Posterior cingulate gyrus (tissue), 11 donors: ENCODE measurements at regions of chr6 and their contacts with region 1.

Region 1: GRCh38 chr6:3742426-3743344 is 8.8 kb downstream of the PXDC1 start:
- DNase-seq: peak; percentile 77 to 98 (median 91)

Region 2: GRCh38 chr6:3887150-3887700 is 144.5 kb after region 1 on chr6:
- intact Hi-C with region 1: loop called (anchors 1 kb)
- DNase-seq: no peak

Region 3: DNA sequence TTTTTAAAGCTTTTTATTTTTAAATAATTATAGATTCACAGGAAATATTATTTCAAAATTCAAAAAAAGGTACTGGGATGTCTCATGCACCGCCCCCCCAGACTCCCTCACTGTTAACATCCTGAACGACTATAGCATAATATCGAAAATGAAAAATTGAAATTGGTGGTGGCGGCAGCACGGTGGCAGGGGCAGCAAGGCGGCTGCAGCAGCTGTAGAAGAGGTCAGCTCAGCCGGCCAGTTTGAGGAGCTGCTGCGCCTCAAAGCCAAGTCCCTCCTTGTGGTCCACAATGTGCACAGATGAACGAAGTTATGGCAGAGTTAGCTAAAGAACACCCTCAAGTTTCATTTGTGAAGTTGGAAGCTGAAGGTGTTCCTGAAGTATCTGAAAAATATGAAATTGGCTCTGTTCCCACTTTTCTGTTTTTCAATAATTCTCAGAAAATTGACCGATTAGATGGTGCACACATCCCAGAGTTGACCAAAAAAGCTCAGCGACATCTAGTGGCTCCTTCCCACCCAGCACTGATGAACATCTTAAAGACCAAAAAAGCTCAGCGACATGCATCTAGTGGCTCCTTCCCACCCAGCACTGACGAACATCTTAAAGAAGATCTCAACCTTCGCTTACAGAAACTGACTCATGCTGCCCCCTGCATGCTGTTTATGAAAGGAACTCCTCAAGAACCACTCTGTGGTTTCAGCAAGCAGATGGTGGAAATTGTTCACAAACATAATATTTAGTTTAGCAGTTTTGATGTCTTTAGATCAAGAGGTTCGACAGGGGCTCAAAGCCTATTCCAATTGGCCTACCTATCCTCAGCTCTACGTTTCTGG is 235.4 kb after region 1 on chr6:
- intact Hi-C with region 1: loop called (anchors 1 kb)
- DNase-seq: peak in 6 of 10 donors; percentile 11 to 84 (median 24)

Region 4: GRCh38 chr6:3990692-3991501 is 248.2 kb after region 1 on chr6:
- intact Hi-C with region 1: loop called (anchors 2 kb)
- DNase-seq: peak; percentile 66 to 97 (median 86)

Region 5: DNA sequence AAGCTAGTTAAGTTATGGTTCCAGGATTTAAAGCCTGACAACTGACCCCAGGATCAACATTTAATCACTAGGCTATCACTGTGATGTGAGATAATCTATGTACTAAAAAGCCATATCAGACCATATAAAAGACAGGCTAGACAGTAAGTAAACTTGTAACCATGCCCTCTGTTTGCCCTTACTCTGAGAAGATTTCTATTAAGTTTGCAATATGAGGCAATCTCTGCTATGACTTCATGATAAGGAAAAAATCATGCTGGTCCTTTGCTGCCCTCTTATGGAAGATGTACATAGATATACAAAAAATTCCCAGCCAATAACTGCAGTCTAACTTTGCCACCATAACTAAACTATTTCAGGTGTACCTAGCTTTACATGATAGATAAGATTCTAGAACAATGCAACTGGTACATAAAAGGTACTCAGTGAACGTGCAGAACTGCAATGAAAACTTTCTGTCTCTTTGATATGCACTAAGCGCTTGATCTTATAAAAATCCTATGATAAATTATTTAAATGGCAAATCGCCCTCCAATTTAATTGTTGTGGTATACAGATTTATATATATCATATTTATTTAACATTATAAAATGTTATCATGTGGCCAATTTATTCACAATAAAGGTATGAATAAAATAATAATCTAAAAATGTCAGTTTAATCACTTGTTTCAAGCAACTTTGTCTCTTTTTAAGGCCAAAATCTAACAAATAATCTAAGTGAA is 265.8 kb after region 1 on chr6:
- intact Hi-C with region 1: loop called (anchors 5 kb)
- DNase-seq: no peak

Region 6: DNA sequence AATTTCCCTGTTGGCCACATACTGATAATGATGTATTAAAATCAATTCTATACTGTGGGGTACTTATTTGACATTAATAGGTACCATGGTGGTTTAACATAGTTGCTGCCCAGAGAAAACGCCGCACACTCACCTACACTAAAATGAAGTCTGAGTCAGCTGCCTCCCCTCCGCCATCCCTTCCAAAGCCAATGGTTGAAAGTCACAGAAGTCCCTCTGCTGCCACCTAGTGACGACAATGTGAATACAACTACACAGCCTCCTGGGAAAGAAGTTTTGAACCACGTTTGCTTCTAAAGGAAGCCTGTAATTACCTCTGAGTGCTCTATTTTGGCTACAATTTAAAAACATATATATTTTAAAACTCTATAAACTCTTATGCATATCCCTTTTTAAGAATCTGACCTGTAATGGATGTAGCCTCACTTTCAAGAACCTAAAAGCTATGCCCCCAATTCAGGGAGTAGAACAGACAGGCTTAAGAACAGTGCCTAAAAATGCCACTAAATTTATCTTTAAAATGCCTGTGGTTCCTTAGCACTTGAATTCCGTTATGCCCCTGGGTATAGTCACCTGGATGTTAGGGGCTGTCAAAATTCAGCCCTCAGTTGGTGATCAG is 413.3 kb after region 1 on chr6:
- intact Hi-C with region 1: loop called (anchors 10 kb)
- DNase-seq: peak; percentile 33 to 92 (median 74)